ENCODE measurements at regions of chr15 and their contacts with region 1.

Region 1: GRCh38 chr15:77186594-77187011 is 115.7 kb upstream of the TSPAN3 start:
- DNase-seq: no peak
- ATAC-seq: peak; percentile 22 to 38
- H3K4me3 ChIP-seq: no peak overlapping the region
- H3K27ac ChIP-seq: no peak overlapping the region
- H3K4me1 ChIP-seq: peaks cover 10% of the 10 kb centered on the region
- H3K27me3 ChIP-seq: no peaks in the 10 kb centered on the region

Region 2: DNA sequence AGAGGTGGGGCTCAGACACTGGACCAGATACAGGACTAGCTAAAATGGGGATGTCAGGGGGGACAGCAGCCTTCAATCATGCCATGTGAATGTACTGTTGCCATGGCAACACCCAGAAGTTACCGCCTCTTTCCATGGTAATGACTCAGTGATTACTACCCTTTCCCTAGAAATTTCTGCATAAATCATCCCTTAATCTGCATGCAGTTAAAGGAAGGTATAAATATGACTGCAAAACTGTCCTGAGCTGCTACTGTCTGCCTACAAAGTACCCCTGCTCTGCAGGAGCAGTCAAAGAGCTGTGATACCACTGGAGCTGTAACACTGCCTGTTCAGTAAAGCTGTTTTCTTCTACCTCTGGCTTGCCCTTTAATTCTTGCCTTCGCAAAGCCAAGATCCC is 65.1 kb after region 1 on chr15:
- intact Hi-C with region 1: no loop called
- DNase-seq: no peak
- ATAC-seq: no peak
- H3K4me3 ChIP-seq: no peak overlapping the region
- H3K27ac ChIP-seq: no peak overlapping the region
- H3K4me1 ChIP-seq: no peaks in the 10 kb centered on the region
- H3K27me3 ChIP-seq: no peaks in the 10 kb centered on the region

Region 3: GRCh38 chr15:77419836-77420609 is 233.4 kb after region 1 on chr15 and contains the start of gene PEAK1:
- intact Hi-C with region 1: loop called in 1 of 4 experiments (anchors 10 kb)
- DNase-seq: peak; percentile 100
- ATAC-seq: peak; percentile 98 to 99
- H3K4me3 ChIP-seq: peak within 1 kb of the TSS; percentile 87
- H3K27ac ChIP-seq: peak within 1 kb of the TSS; percentile 100
- H3K4me1 ChIP-seq: peaks cover 5% of the 10 kb centered on the region
- H3K27me3 ChIP-seq: no peaks in the 10 kb centered on the region
- total RNA-seq, gene PEAK1: 71.7 to 97.3 (median 91.3) TPM

Region 4: GRCh38 chr15:77496710-77497103 is 310.1 kb after region 1 on chr15:
- intact Hi-C with region 1: loop called in 1 of 4 experiments (anchors 5 kb)
- DNase-seq: peak; percentile 89 to 96 (median 94)
- ATAC-seq: peak; percentile 88 to 89
- H3K4me3 ChIP-seq: no peak overlapping the region
- H3K27ac ChIP-seq: peak overlapping the region; percentile 99
- H3K4me1 ChIP-seq: peaks cover 26% of the 10 kb centered on the region
- H3K27me3 ChIP-seq: no peaks in the 10 kb centered on the region

Region 5: GRCh38 chr15:77507911-77508310 is 321.3 kb after region 1 on chr15:
- intact Hi-C with region 1: loop called in 1 of 4 experiments (anchors 5 kb)
- DNase-seq: peak; percentile 63 to 89 (median 82)
- ATAC-seq: peak; percentile 92 to 93
- H3K4me3 ChIP-seq: no peak overlapping the region
- H3K27ac ChIP-seq: peak overlapping the region; percentile 100
- H3K4me1 ChIP-seq: peaks cover 37% of the 10 kb centered on the region
- H3K27me3 ChIP-seq: no peaks in the 10 kb centered on the region